AG04449 (cell line): ENCODE measurements at regions of chr2 and their contacts with region 1.

Region 1: GRCh38 chr2:190343500-190344275 is at the start of gene INPP1:
- DNase-seq: no peak
- H3K4me3 ChIP-seq: peak within 1 kb of the TSS; percentile 73
- CTCF ChIP-seq: no peak

Region 2: DNA sequence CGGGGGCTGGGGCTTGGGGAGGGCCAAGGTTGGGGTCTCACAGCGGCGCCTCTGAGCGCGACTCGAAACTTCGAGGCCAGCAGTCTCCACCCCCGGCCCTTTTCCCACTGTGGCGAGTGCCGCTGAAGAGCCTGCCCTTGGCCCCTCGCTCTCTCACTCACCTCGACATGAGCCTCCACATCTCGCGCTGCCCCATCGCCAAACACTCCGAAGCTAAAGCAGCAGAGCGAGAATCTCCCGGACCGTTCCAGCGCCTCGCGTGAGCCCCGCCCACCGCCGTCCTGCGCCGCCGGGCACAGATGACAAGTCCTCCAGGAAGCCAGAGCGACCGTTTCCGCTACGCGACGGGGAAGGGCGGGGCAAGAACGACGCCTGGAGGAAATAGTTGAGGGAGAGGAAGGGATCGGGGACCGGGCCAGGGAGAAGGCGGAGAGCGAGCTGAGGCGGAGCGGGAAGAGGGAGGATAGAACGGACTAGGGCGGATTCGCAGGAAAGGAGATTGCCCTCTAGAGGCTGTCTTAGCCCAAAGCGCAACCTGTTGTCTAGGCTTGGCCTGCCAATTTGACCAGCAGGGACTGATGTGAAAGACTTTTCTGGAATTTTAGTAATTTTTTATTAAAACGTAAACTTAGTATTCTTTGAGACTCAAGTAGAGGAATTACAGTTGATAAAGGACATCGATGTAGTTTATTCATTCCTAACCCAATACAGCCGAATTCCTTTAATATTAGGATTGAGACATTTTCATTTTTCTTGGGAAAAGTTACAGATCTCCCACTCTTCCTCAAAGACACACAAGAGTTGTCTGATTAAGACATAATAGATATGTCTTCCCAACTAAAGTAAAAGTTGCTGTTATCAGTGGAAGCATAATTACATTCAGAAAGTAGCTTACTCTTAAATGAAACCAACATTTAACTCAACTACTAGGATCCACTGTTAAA is 23.9 kb before region 1 on chr2 and contains the start of gene HIBCH:
- CTCF ChIA-PET with region 1: interaction called, 24 read pairs
- POLR2A ChIA-PET with region 1: no interaction called
- DNase-seq: peak; percentile 86
- H3K4me3 ChIP-seq: peak within 1 kb of the TSS; percentile 78
- CTCF ChIP-seq: peak; percentile 91

Region 3: DNA sequence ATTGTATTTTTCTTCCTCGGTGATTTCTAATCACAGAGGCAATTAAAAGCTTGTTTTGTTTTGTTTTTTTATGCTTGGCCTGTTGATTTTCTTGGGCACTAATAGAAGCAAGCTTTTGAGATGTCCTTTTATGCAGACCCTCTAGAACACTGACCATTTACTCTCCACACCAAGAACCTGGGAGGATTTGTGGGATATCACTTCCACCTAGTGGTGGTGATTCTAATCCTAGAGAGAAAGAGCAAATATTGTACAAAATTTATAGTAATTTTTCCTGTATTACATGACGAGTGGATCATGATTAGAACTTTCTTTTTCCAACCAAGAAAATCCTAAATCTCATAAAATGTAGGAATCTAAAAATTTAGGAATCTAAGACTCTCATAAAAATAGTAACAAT is 167.4 kb after region 1 on chr2:
- CTCF ChIA-PET with region 1: interaction called, 12 read pairs
- POLR2A ChIA-PET with region 1: no interaction called
- DNase-seq: no peak
- H3K4me3 ChIP-seq: no peak overlapping the region
- CTCF ChIP-seq: peak; percentile 26

Region 4: GRCh38 chr2:190528521-190529001 is 184.9 kb after region 1 on chr2:
- CTCF ChIA-PET with region 1: no interaction called
- POLR2A ChIA-PET with region 1: no interaction called
- DNase-seq: peak; percentile 47
- H3K4me3 ChIP-seq: no peak overlapping the region
- CTCF ChIP-seq: no peak